ENCODE measurements at regions of chr5 and their contacts with region 1.

Region 1: DNA sequence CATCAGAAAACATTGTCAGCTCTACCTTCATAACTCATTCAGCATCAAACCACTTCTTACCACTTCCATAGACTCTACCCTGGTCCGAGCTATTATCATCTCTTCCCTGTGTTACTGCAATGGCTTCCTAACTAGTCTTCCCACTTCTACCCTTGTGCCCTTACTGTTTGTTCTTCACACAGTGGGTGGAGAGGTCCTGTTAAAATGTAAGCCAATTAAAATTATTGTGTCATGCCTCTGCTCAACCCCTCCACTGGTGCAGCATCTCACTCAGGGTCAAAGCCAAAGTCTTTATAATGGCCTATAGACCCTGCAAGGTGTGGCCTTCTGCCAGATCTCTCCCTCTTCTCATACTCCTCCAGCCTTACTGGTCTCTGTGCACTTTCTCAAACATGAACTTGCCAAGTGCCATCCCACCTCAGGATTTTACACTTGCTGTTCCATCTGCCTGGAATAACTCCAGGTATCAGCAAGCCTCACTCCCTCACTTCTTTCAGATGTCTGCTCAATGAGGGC is 22.8 kb upstream of the ARAP3 start:
- DNase-seq: peak in 1 of 5 donors; percentile 20
- H3K4me3 ChIP-seq: no peak overlapping the region
- H3K27ac ChIP-seq: no peak overlapping the region
- H3K4me1 ChIP-seq: peaks cover 0 to 10% (median 0%) of the 10 kb centered on the region in 3 donors
- H3K27me3 ChIP-seq: peaks cover 13% of the 10 kb centered on the region
- CTCF ChIP-seq: no peak

Region 2: DNA sequence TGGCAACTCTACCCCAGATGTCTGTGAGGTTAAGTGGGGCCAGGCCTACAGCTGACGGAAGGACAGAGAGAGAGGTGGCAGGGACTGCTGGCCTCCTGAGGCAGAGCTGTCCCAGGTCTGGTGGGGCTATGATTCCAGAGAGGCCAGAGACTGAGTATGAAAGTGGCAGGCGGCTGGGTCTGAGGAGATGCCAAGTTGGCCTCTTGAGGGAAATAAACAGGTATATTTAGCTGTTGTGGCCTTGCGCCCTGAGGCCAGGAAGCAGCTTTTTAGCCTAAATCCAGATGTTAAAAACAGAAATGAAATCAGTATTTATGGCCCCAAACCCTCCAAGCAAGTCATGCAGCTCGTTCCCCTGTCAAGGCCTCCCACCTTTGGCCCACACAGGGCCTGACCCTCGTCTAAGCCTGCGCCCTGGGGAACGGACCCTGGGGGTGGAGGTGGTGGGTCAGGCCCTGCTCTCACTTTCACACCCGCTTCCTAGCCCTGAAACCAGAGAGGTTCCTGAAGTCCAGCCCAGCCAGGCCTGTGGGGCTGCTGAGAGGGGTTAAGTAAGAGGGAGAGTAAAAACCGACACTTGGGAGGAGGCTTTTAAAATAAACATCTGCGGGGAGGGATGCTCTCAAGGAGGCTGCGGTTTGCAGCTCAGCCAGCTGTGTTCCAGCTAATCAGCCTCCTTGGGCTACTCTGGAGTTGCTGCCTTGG is 197.3 kb before region 1 on chr5:
- intact Hi-C with region 1: no loop called
- DNase-seq: peak in 4 of 5 donors; percentile 48 to 90 (median 78)
- H3K4me3 ChIP-seq: no peak overlapping the region
- H3K27ac ChIP-seq: peak overlapping the region; percentile 23 to 49
- H3K4me1 ChIP-seq: peaks cover 4 to 6% (median 6%) of the 10 kb centered on the region in 3 donors
- H3K27me3 ChIP-seq: no peaks in the 10 kb centered on the region
- CTCF ChIP-seq: no peak

Region 3: DNA sequence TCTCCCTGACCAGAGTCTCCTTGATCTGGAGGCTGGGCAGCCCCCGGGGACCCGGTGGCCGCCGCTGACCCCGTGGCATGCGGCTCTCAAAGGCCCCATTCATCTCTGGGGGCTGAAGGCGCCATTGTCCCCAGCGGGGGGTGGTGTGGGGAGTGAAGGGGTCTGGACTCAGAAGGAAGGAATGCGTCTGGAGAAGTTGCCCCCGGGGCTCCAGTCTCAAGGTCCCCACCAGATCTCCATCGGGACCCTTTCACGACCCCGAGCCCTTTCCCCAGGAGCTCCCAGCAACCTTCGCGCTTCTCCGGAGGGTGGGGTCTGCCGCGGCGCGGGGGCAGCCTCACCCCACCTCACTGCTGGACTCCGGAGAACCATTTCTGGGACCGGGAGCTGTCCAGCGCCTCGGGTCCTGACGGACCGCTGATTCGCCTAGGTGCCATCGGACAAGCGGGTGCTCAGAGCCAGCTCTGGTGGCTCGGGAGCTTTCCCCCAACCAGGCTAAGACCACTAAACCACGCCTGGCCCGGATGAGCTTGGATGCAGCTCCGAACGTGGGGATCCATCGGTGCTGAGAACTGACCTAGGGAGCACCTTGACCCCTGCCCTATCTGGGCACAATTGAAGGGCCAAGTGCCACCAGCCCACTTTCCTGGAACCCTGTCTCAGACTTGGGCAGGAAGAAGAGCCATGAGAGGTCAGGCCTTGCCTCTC is 178.5 kb after region 1 on chr5:
- intact Hi-C with region 1: loop called (anchors 5 kb)
- DNase-seq: peak; percentile 70 to 89 (median 86)
- H3K4me3 ChIP-seq: no peak overlapping the region
- H3K27ac ChIP-seq: no peak overlapping the region
- H3K4me1 ChIP-seq: peaks cover 0 to 16% (median 0%) of the 10 kb centered on the region in 3 donors
- H3K27me3 ChIP-seq: peaks cover 19% of the 10 kb centered on the region
- CTCF ChIP-seq: no peak

Measured in kidney (tissue), 22 donors.